Posterior cingulate gyrus (tissue), 11 donors: ENCODE measurements at regions of chr2 and their contacts with region 1.

Region 1: DNA sequence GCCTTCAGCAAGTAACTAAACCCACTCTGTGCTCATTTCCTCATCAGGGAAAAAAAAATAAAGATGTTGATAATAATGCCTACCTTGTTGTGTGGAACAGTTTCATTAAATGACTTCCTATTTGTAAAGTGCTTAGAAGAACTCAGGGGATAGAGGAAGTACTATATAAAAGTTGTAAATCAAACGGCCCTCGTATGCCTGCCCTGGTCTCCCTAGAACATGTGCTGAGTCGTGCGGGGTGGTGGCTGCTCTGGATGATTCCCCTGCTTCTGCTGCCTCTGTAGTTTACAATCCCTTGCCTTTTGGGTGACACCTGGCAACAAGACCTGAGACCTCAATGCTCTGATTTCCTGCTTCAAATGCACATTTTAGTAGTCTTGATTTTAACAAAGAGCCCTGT is 170.0 kb downstream of the CERS6 start:
- DNase-seq: peak in 1 of 10 donors; percentile 47

Region 2: GRCh38 chr2:168455648-168456520 is 170.2 kb before region 1 on chr2 and contains the start of gene CERS6:
- intact Hi-C with region 1: loop called (anchors 10 kb)
- DNase-seq: peak; percentile 80 to 99 (median 96)

Region 3: DNA sequence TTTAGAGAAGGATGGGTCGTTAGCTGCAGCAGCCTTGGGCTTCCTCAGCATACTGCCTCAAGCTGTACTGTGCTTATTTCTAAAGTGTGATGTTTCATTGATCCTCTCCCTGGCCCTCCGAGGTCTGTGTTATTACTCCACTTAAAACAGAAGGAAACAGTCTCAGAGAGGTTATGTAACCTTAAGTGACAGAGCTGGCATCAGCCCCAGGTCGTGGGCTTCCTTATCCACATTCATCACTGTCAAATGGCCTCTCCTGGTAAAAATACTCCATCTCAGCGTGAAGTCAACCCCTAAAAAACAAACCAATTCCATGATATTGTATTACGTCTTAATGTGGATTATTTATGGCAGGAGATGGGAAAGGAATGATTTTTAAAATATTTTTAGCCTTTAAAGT is 23.0 kb after region 1 on chr2:
- intact Hi-C with region 1: no loop called
- DNase-seq: no peak

Region 4: DNA sequence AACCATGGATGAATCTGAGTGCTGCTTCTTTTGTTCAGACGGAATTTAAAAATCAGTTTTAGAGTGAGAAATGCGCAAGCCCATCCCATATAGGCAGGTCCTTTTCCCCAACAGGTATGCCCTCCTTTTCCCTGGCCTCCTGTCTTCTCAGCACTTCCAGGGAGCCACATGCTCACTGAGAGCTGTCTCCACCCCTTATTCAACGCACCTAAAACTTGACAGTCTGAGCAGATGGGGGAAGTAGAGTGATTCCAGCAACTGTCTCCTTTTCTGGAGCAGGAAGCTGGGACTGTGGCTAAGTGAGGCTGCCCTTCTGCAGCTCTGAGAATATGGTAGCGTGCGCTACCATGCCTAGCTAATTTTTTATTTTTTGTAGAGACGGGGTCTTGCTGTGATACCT is 123.2 kb after region 1 on chr2:
- intact Hi-C with region 1: no loop called
- DNase-seq: no peak